Activated CD8-positive, alpha-beta T cell treated with anti-CD3 and anti-CD28 coated beads, Interleukin-2, amount 10 ng/mL, durations not matched to agents 7 days and 5 days (primary cell): ENCODE measurements at regions of chr2 and their contacts with region 1.

Region 1: GRCh38 chr2:174771631-174772471 is 7.6 kb upstream of the CHRNA1 start:
- DNase-seq: peak; percentile 65
- ATAC-seq: peak; percentile 75
- H3K4me3 Mint-ChIP-seq: no peak overlapping the region
- H3K27ac Mint-ChIP-seq: no peak overlapping the region
- H3K4me1 Mint-ChIP-seq: peaks cover 18% of the 10 kb centered on the region
- H3K27me3 Mint-ChIP-seq: peaks cover 4% of the 10 kb centered on the region

Region 2: GRCh38 chr2:174711206-174711605 is 60.6 kb before region 1 on chr2:
- CTCF ChIA-PET with region 1: no interaction called
- POLR2A ChIA-PET with region 1: no interaction called
- DNase-seq: no peak
- ATAC-seq: no peak
- H3K4me3 Mint-ChIP-seq: no peak overlapping the region
- H3K27ac Mint-ChIP-seq: no peak overlapping the region
- H3K4me1 Mint-ChIP-seq: peaks cover 12% of the 10 kb centered on the region
- H3K27me3 Mint-ChIP-seq: peaks cover 8% of the 10 kb centered on the region

Region 3: DNA sequence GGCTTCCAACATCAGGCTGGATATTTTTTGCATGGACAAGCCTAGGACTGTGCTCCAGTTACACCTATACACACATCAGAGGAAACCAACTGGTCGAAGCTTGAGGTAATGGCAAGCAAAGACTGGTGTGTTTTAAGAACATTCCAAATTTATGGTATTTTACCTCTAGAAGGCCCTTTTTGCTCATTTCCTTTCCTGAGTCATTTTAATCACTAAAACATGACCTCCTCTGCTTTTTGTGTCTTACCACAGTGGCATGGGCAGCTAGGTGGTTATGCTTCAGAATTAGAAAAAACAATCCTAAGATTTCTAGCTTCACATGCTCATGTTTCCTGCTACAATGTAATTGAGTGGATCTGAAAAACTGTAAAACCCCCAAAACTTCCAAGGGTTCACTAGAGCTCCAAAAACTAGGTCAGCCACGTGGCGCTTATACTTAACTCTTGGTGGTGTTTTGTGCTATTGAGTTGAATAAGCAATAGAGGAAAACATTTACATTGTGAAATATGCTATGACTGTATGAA is 23.1 kb after region 1 on chr2:
- CTCF ChIA-PET with region 1: interaction called, 10 read pairs
- POLR2A ChIA-PET with region 1: no interaction called
- DNase-seq: no peak
- ATAC-seq: no peak
- H3K4me3 Mint-ChIP-seq: no peak overlapping the region
- H3K27ac Mint-ChIP-seq: no peak overlapping the region
- H3K4me1 Mint-ChIP-seq: peaks cover 5% of the 10 kb centered on the region
- H3K27me3 Mint-ChIP-seq: no peaks in the 10 kb centered on the region

Region 4: DNA sequence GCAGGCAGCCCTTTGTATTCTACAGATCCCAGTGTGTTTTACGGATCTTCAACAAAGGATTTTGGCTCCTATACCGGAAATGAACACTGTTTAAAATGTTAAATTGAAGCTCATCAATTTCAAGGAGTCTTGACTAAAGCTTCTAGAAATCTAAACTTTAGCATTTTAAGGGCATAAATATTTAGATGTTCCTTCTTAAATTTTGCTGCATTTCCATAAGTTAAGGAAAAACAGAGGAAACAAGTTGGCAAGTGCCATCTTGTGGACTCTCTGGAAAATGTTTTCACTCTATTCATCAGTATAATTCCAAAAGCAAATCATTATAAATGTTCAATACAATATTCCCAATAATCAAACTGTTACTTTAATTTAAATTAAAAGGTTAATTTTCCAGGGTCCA is 213.8 kb after region 1 on chr2:
- CTCF ChIA-PET with region 1: interaction called, 39 read pairs
- POLR2A ChIA-PET with region 1: no interaction called
- DNase-seq: no peak
- ATAC-seq: no peak
- H3K4me3 Mint-ChIP-seq: no peak overlapping the region
- H3K27ac Mint-ChIP-seq: no peak overlapping the region
- H3K4me1 Mint-ChIP-seq: peaks cover 2% of the 10 kb centered on the region
- H3K27me3 Mint-ChIP-seq: peaks cover 11% of the 10 kb centered on the region

Region 5: GRCh38 chr2:174992886-174993285 is 221.0 kb after region 1 on chr2:
- CTCF ChIA-PET with region 1: interaction called, 36 read pairs
- POLR2A ChIA-PET with region 1: no interaction called
- DNase-seq: no peak
- ATAC-seq: no peak
- H3K4me3 Mint-ChIP-seq: no peak overlapping the region
- H3K27ac Mint-ChIP-seq: no peak overlapping the region
- H3K4me1 Mint-ChIP-seq: peaks cover 2% of the 10 kb centered on the region
- H3K27me3 Mint-ChIP-seq: peaks cover 12% of the 10 kb centered on the region